CD8-positive, alpha-beta T cell (primary cell): ENCODE measurements at regions of chr14 and their contacts with region 1.

Region 1: DNA sequence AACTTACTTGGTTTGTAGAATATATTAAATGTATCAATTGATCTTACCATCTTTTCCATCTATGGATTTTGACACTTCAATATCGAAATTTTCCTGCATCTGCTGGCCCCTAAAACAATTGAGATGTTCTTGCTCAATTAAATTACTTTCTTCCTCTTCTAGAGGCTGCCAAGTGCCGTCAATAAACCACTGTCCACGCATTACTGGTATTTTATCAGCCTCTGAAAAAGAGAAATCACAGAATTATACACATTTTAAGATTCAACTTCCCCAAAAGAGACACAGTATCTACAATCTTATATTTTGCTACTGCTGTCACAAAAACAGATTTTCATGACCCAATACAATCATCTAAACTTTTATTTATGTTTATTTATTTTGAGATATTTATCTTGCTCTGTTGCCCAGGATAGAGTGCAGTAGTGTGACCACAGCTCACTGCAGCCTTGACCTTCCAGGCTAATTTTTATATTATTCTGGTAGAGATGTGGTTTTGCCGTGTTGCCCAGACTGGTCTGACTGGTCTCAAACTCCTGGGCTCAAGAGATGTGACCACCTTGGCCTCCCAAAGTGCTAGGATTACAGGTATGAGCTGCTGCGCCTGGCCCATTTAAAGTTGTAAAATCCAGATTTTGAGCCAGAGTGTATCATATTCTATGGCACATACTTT is 49.4 kb downstream of the DDHD1 start:
- DNase-seq: no peak
- ATAC-seq: no peak
- H3K4me3 ChIP-seq: no peak overlapping the region
- H3K4me3 Mint-ChIP-seq: no peak overlapping the region
- H3K27ac ChIP-seq: no peak overlapping the region
- H3K27ac Mint-ChIP-seq: no peak overlapping the region
- H3K4me1 ChIP-seq: peaks cover 18% of the 10 kb centered on the region
- H3K4me1 Mint-ChIP-seq: peaks cover 27% of the 10 kb centered on the region
- H3K27me3 ChIP-seq: no peaks in the 10 kb centered on the region
- H3K27me3 Mint-ChIP-seq: no peaks in the 10 kb centered on the region
- CTCF ChIP-seq: no peak

Region 2: DNA sequence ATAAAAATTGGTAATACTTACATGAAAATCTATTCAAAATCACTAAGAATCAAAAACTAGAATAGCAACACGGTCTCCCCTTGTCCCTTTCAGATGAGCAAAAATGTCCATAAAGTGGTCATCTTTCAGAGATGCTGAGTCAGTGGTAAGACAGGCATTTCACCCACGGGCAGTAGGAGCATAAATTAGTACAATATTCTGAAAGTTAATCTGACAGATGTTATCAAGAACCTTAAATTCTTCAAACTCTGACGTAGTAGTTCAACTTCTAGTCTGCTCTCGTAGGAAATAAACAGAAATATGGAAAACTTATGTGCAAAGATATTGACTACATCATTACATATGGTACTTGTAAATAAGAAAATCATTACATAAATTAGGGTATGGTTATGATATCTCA is 279.3 kb before region 1 on chr14:
- CTCF ChIA-PET with region 1: no interaction called
- POLR2A ChIA-PET with region 1: no interaction called
- intact Hi-C with region 1: no loop called
- DNase-seq: no peak
- ATAC-seq: no peak
- H3K4me3 ChIP-seq: no peak overlapping the region
- H3K4me3 Mint-ChIP-seq: no peak overlapping the region
- H3K27ac ChIP-seq: no peak overlapping the region
- H3K27ac Mint-ChIP-seq: no peak overlapping the region
- H3K4me1 ChIP-seq: no peaks in the 10 kb centered on the region
- H3K4me1 Mint-ChIP-seq: no peaks in the 10 kb centered on the region
- H3K27me3 ChIP-seq: no peaks in the 10 kb centered on the region
- H3K27me3 Mint-ChIP-seq: peaks cover 4% of the 10 kb centered on the region
- CTCF ChIP-seq: no peak

Region 3: DNA sequence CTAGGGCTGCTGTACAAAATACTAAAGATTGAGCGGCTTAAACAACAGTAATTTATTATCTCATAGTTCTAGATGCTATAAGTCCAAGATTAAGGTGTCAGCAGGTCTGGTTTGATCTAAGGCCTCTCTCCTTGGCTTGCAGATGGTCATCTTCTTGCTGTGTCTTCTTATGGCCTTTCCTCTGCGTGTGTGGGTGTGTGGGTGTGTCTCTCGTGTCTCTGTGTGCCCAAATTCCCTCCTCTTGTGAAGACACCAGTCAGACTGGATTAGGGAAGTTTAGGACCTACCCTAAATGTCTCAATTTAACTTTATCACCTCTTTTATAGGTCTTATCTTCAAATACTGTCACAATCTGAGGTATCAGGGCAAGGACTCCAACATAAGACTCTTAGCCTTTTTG is 21.0 kb after region 1 on chr14:
- CTCF ChIA-PET with region 1: interaction called, 4 read pairs
- POLR2A ChIA-PET with region 1: interaction called, 4 read pairs
- intact Hi-C with region 1: loop called in 1 of 2 experiments (anchors 2 kb)
- DNase-seq: no peak
- ATAC-seq: no peak
- H3K4me3 ChIP-seq: no peak overlapping the region
- H3K4me3 Mint-ChIP-seq: no peak overlapping the region
- H3K27ac ChIP-seq: no peak overlapping the region
- H3K27ac Mint-ChIP-seq: no peak overlapping the region
- H3K4me1 ChIP-seq: peaks cover 15% of the 10 kb centered on the region
- H3K4me1 Mint-ChIP-seq: peaks cover 43% of the 10 kb centered on the region
- H3K27me3 ChIP-seq: no peaks in the 10 kb centered on the region
- H3K27me3 Mint-ChIP-seq: no peaks in the 10 kb centered on the region
- CTCF ChIP-seq: no peak